Activated CD8-positive, alpha-beta T cell treated with anti-CD3 and anti-CD28 coated beads for 36 hours (primary cell): ENCODE measurements at regions of chr19 and their contacts with region 1.

Region 1: DNA sequence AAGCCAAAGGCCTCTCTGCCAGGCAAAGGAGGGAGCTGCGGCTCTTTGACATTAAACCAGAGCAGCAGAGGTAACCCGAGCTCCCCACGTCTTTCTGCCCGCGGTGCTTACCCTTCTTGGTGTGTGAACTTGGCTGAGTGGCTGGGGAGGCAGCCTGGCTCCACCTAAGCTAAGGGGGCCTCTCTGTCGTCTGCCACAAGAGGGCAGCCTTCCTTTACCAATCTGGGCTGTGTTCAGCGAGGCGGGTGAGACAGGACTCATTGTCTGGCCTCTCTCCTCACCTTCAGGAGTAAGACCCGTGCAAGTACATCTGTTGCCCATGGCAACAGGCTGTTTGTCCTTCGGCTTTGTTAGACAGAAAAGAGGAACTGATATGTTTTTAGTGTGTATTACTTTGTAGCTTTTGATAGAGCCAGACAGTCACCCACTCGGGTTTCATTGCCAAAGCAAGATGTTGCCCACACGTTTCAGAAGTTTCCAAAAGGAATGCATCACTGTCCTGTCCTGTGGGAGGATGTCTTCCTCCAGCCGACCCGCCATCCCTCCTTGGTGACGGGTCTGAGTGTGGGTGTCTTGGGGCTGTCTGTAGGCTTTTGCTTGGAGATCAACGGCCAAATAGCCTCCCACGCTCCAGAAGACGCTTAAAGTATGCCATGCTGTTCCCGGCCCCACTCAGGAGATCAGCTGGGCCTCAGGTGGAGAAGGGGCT is 4.6 kb downstream of the POP4 start:
- DNase-seq: peak; percentile 92
- ATAC-seq: peak; percentile 74
- H3K4me3 Mint-ChIP-seq: no peak overlapping the region
- H3K27ac Mint-ChIP-seq: peak overlapping the region; percentile 39
- H3K4me1 Mint-ChIP-seq: peaks cover 25% of the 10 kb centered on the region
- H3K27me3 Mint-ChIP-seq: no peaks in the 10 kb centered on the region
- CTCF ChIP-seq: peak; percentile 86

Region 2: DNA sequence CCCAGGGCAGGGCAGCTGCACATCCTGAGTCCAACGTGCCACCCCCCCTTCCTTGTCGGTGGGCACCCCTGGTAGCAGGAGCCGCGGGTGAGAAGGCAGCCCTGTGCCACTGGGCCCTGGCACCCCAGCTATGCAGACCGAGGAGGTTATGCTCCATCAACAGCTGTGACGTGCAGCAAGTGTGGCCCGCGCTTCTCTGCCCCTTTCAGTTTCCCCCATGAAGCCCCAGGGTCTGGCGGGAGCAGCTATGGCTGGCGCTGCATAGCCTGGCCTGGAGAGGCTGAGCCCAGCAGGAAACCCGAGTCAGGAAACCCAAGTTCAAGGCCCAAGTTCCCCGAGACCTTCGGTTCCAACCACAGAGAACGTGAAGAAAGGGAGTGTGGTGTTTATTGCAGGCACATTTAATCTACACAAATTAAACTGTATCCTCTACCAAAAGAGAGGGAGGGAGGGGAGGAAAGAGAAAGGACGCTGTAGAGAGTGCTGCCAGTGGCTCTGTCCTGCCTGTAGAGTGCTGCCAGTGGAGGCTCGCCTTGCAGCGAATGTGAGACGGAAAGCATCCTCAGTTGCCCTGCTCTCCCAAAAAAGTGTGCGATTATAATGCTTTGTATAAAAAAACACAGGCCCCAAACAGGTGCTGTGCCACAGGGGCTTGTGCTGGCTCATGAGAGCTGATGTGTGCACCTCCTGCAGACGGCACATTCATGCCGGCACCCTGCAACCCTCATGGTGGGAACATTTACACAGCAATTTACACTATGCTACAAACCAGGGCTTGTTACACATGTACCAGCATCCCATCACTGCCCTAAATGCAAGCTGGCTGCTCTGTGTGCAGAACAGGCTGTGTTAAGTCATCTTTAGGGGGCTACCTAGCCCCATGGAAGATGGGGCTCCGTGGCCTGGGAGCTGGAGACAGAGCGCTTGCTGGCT is 11.7 kb after region 1 on chr19:
- CTCF ChIA-PET with region 1: interaction called, 115 read pairs
- POLR2A ChIA-PET with region 1: interaction called, 25 read pairs
- intact Hi-C with region 1: no loop called
- DNase-seq: peak; percentile 64
- ATAC-seq: peak; percentile 57
- H3K4me3 Mint-ChIP-seq: peak overlapping the region; percentile 20
- H3K27ac Mint-ChIP-seq: peak overlapping the region; percentile 83
- H3K4me1 Mint-ChIP-seq: peaks cover 51% of the 10 kb centered on the region
- H3K27me3 Mint-ChIP-seq: no peaks in the 10 kb centered on the region
- CTCF ChIP-seq: no peak

Region 3: GRCh38 chr19:29671393-29672160 is 60.9 kb after region 1 on chr19:
- CTCF ChIA-PET with region 1: interaction called, 66 read pairs
- POLR2A ChIA-PET with region 1: interaction called, 36 read pairs
- intact Hi-C with region 1: no loop called
- DNase-seq: peak; percentile 96
- ATAC-seq: peak; percentile 66
- H3K4me3 Mint-ChIP-seq: peak overlapping the region; percentile 52
- H3K27ac Mint-ChIP-seq: peak overlapping the region; percentile 90
- H3K4me1 Mint-ChIP-seq: peaks cover 89% of the 10 kb centered on the region
- H3K27me3 Mint-ChIP-seq: no peaks in the 10 kb centered on the region
- CTCF ChIP-seq: peak; percentile 77

Region 4: DNA sequence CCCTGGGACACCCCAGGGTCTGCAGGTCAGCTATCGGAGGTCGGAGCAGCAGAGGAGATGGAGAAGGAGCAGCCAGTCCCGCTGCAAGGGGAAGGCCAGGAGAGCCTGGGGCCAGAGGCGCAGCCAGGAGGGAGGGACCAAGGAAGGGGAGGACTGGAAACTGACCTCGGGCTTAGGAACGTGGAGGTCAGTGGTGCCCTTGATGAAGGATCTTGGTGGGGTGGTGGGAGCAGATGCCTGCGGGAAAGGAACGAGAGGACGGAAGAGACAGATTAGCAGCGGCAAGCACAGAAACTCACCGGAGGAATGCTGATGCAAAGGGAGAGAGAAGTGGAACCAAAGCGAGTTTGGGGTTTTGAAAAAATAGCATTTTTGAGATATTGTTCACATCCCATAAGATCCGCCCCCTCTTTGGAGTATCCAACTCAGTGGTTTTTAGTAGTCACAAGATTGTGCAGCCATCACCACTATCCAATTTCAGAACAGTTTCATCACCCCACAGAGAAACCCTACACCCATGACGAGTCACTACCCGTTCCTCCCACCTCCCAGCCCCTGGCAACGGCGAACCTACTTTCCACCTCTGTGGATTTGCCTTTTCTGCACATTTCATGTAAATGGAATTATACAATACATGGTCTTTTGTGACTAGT is 76.7 kb after region 1 on chr19:
- CTCF ChIA-PET with region 1: interaction called, 217 read pairs
- POLR2A ChIA-PET with region 1: interaction called, 20 read pairs
- intact Hi-C with region 1: loop called (anchors 1 kb)
- DNase-seq: peak; percentile 71
- ATAC-seq: peak; percentile 60
- H3K4me3 Mint-ChIP-seq: no peak overlapping the region
- H3K27ac Mint-ChIP-seq: peak overlapping the region; percentile 58
- H3K4me1 Mint-ChIP-seq: peaks cover 37% of the 10 kb centered on the region
- H3K27me3 Mint-ChIP-seq: no peaks in the 10 kb centered on the region
- CTCF ChIP-seq: no peak

Region 5: DNA sequence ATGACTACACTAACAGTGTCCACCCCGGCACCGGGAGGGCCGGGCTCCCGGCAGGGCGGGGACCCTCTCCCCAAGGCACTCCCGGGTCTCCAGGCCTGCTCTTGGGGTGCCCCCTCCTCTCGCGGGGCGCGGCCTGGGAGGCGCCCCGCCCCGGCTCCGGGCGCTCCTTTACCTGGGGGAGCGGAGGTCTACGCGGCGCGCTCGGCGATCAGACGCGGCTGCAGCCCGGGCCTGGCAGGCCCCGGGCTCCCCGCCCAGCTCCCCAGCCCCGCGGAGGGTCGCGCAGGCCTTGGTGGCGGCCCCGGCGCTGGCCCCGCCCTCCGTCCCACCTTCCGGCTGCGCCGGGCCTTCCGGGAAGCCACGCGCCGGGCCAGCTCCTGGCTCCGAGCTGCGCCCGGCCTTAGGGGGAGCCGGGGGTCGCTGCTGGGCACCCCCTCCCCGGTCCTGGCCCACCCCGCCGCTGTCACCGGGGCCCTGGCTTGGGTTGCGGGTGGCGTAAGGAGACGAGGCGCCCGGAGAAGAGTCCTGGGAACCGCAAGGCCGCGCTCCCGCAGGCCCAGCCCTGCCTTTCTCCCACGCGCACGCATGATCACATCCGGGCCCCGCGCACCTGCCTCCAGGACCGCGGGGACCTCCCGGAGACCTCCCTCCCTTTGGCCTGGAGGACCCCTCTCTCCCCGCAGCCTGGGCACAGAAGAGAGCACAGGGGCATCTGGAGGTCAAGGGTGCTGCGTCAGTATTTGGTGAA is 104.4 kb after region 1 on chr19 and contains the start of gene C19orf12:
- CTCF ChIA-PET with region 1: interaction called, 165 read pairs
- POLR2A ChIA-PET with region 1: interaction called, 22 read pairs
- intact Hi-C with region 1: loop called (anchors 2 kb)
- DNase-seq: peak; percentile 75
- ATAC-seq: peak; percentile 62
- H3K4me3 Mint-ChIP-seq: peak within 1 kb of the TSS; percentile 97
- H3K27ac Mint-ChIP-seq: peak within 1 kb of the TSS; percentile 98
- H3K4me1 Mint-ChIP-seq: peaks cover 46% of the 10 kb centered on the region
- H3K27me3 Mint-ChIP-seq: no peaks in the 10 kb centered on the region
- CTCF ChIP-seq: no peak
- total RNA-seq, gene C19orf12: 33.3 to 36.6 TPM